AG04449 (cell line): ENCODE measurements at regions of chr2 and their contacts with region 1.

Region 1: DNA sequence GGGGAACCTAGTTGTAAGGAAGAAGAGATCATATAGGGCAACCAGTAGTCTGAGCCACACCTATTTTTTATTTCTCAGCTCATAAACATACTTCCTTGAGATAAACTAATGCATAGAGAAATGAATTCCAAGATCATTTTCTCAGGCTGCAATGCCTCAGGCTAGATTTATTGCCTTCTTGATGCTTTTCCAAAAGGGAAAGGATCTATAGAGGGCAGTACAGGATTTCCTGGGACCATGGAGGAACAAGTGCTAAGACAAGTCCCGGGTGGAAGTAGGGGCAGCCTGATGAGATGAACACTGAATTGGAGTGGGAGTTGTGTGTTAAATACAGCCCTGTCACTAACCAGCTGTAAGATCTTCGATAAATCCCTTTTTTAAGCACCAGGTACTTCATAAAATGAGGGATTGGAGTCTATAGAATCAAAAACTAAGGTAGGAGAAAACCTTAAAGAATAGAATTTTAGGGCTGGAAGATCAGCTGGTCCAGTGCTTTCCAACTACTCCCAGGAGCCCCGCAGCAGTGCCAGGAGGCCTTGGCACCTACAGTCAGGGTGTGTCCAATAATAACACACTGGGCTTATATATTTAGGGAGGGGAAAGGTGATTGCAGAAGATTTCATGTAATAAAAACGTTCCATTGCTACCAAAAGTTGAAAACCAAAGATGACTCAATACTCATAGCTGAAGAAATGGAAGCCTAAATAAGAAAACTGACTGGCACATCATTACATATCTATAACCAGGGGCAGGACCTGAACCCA is 58.1 kb downstream of the SERTAD2 start:
- DNase-seq: no peak
- H3K4me3 ChIP-seq: no peak overlapping the region
- CTCF ChIP-seq: peak; percentile 12

Region 2: DNA sequence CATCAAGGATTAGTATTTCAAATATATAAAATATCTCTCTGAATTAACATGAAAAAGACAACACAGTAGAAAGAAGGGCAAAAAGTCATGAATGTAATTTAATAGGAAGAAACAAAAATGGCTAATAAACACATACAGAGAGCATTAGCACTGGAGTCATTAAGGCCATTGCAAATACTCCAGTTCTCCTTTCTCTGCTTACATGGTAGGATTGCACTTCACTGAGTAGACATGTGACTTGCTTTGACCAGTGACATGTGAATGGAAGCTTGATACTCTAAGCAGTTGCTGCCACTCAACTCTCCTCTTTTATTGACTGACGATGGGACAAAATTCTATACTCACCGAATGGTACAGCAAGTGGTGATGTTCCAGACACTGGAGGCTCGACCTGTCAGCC is 295.5 kb before region 1 on chr2:
- CTCF ChIA-PET with region 1: no interaction called
- POLR2A ChIA-PET with region 1: no interaction called
- DNase-seq: no peak
- H3K4me3 ChIP-seq: no peak overlapping the region
- CTCF ChIP-seq: no peak

Region 3: GRCh38 chr2:64474121-64474571 is 121.4 kb before region 1 on chr2:
- CTCF ChIA-PET with region 1: no interaction called
- POLR2A ChIA-PET with region 1: no interaction called
- DNase-seq: no peak
- H3K4me3 ChIP-seq: no peak overlapping the region
- CTCF ChIP-seq: no peak

Region 4: DNA sequence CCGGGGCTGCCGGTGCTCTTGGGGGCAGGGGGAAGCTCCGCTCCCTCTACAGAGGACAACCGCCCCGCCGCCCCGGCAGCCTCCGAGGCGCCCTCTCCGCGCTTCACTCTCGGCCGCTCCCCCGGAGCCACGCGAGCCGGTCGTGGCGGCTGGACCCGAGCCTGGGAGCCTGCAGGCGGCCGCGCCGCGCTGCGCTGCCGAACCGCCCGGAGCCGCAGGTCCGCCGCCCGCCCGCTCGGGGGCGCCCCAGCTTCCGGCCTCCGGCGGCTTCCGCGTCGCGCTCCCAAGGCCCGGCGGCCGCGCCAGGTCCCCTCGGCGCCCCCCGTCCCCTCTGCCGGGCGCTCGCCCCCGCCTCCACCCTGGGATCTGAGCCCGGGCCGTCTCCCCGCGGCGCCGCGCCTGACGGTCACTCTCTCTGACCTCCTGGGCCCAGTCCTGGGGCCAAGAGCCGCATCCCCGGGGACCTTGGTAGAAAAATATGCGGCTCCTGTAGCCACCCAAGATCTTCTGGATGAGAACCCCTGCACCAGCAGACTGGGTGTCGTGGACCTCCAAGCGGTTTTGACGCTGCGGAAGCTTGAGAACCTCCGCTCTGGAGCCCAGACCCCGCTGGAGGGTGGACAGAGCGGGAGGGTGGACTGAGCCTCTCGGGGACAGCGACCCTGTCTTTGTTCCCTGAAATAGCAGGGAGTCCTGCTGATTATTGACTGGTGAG is 13.8 kb after region 1 on chr2:
- CTCF ChIA-PET with region 1: interaction called, 19 read pairs
- POLR2A ChIA-PET with region 1: no interaction called
- DNase-seq: no peak
- H3K4me3 ChIP-seq: no peak overlapping the region; the same call in 1 of the 2 replicates
- CTCF ChIP-seq: peak; percentile 14

Region 5: DNA sequence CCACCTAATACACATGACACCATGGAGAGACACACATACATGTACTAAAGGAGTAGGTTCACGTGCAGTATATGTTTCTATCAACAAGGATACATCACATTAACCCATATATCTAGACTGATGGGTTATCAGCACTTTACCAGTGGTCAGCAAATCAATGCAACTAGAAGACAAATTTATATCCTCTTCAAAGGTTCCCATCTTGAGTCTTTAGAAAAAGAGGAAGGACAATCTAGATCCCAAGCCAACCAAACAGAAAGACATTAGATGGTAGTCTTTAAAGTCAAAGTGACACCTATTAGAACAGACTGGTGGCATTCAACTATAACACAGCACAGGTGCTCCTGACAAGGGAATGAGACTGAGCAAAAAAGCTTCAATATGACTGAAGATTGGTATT is 72.0 kb after region 1 on chr2:
- CTCF ChIA-PET with region 1: no interaction called
- POLR2A ChIA-PET with region 1: no interaction called
- DNase-seq: no peak
- H3K4me3 ChIP-seq: no peak overlapping the region
- CTCF ChIP-seq: no peak

Region 6: GRCh38 chr2:64865073-64865830 is 269.7 kb after region 1 on chr2:
- CTCF ChIA-PET with region 1: interaction called, 12 read pairs
- POLR2A ChIA-PET with region 1: interaction called, 3 read pairs
- DNase-seq: no peak
- H3K4me3 ChIP-seq: peak overlapping the region; percentile 54
- CTCF ChIP-seq: peak; percentile 46

Region 7: GRCh38 chr2:64873472-64873924 is 277.9 kb after region 1 on chr2:
- CTCF ChIA-PET with region 1: interaction called, 28 read pairs
- POLR2A ChIA-PET with region 1: no interaction called
- DNase-seq: no peak
- H3K4me3 ChIP-seq: no peak overlapping the region; the same call in 1 of the 2 replicates
- CTCF ChIP-seq: peak; percentile 97